CD8-positive, alpha-beta T cell (primary cell): ENCODE measurements at regions of chr11 and their contacts with region 1.

Region 1: DNA sequence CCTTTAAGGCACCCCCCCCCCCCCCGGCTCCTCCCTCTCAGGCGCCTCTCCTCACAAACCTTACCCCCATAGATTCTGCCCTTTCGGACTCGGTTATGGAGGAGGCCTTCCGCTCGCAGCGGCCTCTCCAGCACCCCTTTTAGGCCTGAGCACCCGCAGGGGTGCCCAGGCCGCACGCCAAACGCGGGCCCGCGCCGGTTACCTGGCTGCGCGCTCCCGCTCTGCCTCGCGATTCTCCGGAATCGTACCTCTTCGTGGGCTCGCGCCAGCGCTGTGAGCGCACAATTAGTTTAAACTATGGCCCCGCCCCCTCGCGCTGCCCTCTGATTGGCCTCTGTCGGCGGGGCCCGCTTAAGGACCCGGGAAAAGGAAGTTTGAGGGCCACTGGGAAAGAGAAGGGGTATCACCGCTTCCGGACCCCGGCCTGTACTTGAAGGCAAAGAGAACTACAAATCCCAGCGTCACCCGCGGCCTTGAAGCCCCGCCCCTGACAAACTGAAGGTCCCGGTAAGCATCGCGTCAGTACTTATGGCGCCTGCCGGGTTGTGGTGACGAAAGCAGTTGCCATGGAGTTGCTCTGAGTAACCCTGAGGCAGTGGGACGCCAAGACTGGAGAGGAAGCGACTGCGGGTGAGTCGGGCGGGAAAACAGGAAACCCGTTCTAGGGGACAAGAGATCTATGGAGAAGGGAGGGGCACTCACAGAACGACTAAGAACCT is at the starts of genes LRRC51 and NUMA1:
- DNase-seq: peak; percentile 96 to 100 (median 99)
- ATAC-seq: peak; percentile 86
- H3K4me3 ChIP-seq: peak within 1 kb of the TSS; percentile 61 to 73
- H3K4me3 Mint-ChIP-seq: peak within 1 kb of the TSS; percentile 97
- H3K27ac ChIP-seq: peak within 1 kb of the TSS; percentile 75 to 90
- H3K27ac Mint-ChIP-seq: peak within 1 kb of the TSS; percentile 97
- H3K4me1 ChIP-seq: peaks cover 14% of the 10 kb centered on the region
- H3K4me1 Mint-ChIP-seq: peaks cover 39% of the 10 kb centered on the region
- H3K27me3 ChIP-seq: no peaks in the 10 kb centered on the region
- H3K27me3 Mint-ChIP-seq: no peaks in the 10 kb centered on the region
- CTCF ChIP-seq: no peak
- total RNA-seq, gene LRRC51: 1.1 to 1.3 TPM
- total RNA-seq, gene NUMA1: 171 to 174 TPM

Region 2: GRCh38 chr11:71928737-71929452 is 151.5 kb before region 1 on chr11 and contains the start of gene RNF121:
- CTCF ChIA-PET with region 1: no interaction called
- POLR2A ChIA-PET with region 1: no interaction called
- intact Hi-C with region 1: loop called (anchors 1 kb)
- DNase-seq: peak; percentile 94 to 99 (median 97)
- ATAC-seq: peak; percentile 86
- H3K4me3 ChIP-seq: peak within 1 kb of the TSS; percentile 67 to 98
- H3K4me3 Mint-ChIP-seq: peak within 1 kb of the TSS; percentile 100
- H3K27ac ChIP-seq: peak within 1 kb of the TSS; percentile 90 to 96
- H3K27ac Mint-ChIP-seq: peak within 1 kb of the TSS; percentile 99
- H3K4me1 ChIP-seq: peaks cover 22% of the 10 kb centered on the region
- H3K4me1 Mint-ChIP-seq: peaks cover 57% of the 10 kb centered on the region
- H3K27me3 ChIP-seq: no peaks in the 10 kb centered on the region
- H3K27me3 Mint-ChIP-seq: no peaks in the 10 kb centered on the region
- CTCF ChIP-seq: no peak
- total RNA-seq, gene RNF121: 8.5 to 9.0 TPM

Region 3: DNA sequence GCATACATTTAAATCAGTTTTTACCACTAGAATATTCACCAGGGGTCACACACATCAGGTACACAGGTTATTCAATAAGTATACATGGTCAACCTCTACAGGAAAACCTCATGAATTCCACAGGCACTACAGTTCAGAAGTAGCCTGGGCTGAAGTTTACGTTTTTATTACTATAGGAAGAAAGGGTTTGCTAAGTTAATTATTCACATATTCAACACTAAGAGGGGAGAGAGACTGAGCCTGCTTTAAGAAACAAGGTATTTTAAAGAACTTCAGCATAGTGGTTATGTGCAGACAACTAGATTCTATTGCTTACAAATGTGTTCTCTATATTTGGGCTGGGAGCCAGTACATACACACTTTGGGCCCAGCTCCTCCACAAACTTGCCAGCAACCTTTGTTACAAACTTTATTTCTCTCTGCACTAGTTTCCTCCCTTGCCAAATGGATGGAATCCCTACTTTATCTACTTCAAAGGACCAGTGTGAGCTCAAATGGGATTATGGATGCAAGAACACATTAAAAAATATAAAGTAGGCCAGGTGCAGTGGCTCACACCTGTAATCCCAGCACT is 49.9 kb before region 1 on chr11:
- CTCF ChIA-PET with region 1: interaction called, 82 read pairs
- POLR2A ChIA-PET with region 1: no interaction called
- intact Hi-C with region 1: loop called in 1 of 2 experiments (anchors 1 kb)
- DNase-seq: no peak
- ATAC-seq: no peak
- H3K4me3 ChIP-seq: no peak overlapping the region
- H3K4me3 Mint-ChIP-seq: no peak overlapping the region
- H3K27ac ChIP-seq: peak overlapping the region in 1 of 2 experiments; percentile 0
- H3K27ac Mint-ChIP-seq: peak overlapping the region; percentile 64
- H3K4me1 ChIP-seq: peaks cover 38% of the 10 kb centered on the region
- H3K4me1 Mint-ChIP-seq: peaks cover 71% of the 10 kb centered on the region
- H3K27me3 ChIP-seq: no peaks in the 10 kb centered on the region
- H3K27me3 Mint-ChIP-seq: no peaks in the 10 kb centered on the region
- CTCF ChIP-seq: no peak

Region 4: DNA sequence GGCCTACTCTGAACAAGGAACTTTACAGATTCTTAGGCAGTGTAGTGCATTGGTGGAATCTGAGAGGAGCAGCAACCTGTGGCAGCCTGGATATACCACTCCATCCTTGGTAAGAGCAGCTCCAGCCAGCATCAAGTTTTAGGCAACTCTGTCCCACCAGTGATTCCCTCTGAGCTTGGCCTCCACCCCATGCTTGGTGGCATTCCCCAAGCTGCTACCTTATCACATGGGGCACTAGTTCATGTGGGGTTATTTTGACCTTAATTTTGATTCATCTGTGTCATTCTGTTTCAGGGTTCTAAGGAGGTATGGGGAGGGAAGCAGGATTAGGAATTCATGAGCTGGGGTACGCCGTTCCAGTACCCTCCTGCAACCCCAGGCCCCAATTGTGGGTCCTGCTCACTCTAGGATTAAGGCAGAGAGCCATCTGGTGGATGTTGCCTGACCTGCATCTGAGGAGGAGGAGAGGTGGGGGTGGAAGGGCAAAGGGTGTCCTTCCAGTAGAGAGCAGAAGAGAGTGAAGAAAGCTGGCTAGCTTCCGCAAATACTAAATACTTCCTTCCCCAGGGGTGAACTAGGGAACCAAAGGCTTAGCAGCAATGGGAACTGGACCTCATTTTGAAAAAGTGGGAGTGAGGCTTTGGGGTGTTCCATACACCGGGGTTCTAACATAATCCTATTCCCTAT is 10.7 kb after region 1 on chr11:
- CTCF ChIA-PET with region 1: interaction called, 25 read pairs
- POLR2A ChIA-PET with region 1: no interaction called
- intact Hi-C with region 1: no loop called
- DNase-seq: peak; percentile 50 to 80 (median 73)
- ATAC-seq: peak; percentile 99
- H3K4me3 ChIP-seq: no peak overlapping the region
- H3K4me3 Mint-ChIP-seq: no peak overlapping the region
- H3K27ac ChIP-seq: no peak overlapping the region
- H3K27ac Mint-ChIP-seq: peak overlapping the region; percentile 70
- H3K4me1 ChIP-seq: no peaks in the 10 kb centered on the region
- H3K4me1 Mint-ChIP-seq: peaks cover 12% of the 10 kb centered on the region
- H3K27me3 ChIP-seq: no peaks in the 10 kb centered on the region
- H3K27me3 Mint-ChIP-seq: no peaks in the 10 kb centered on the region
- CTCF ChIP-seq: peak; percentile 74

Region 5: GRCh38 chr11:72112321-72113219 is 32.2 kb after region 1 on chr11 and contains the start of gene ANAPC15:
- CTCF ChIA-PET with region 1: interaction called, 8 read pairs
- POLR2A ChIA-PET with region 1: interaction called, 4 read pairs
- intact Hi-C with region 1: loop called (anchors 1 kb)
- DNase-seq: peak; percentile 95 to 100 (median 98)
- ATAC-seq: peak; percentile 85
- H3K4me3 ChIP-seq: peak within 1 kb of the TSS; percentile 63 to 65
- H3K4me3 Mint-ChIP-seq: peak within 1 kb of the TSS; percentile 96
- H3K27ac ChIP-seq: peak within 1 kb of the TSS; percentile 88 to 94
- H3K27ac Mint-ChIP-seq: peak within 1 kb of the TSS; percentile 99
- H3K4me1 ChIP-seq: peaks cover 16% of the 10 kb centered on the region
- H3K4me1 Mint-ChIP-seq: peaks cover 23% of the 10 kb centered on the region
- H3K27me3 ChIP-seq: no peaks in the 10 kb centered on the region
- H3K27me3 Mint-ChIP-seq: peaks cover 4% of the 10 kb centered on the region
- CTCF ChIP-seq: no peak
- total RNA-seq, gene ANAPC15: 42.1 to 46.2 TPM

Region 6: DNA sequence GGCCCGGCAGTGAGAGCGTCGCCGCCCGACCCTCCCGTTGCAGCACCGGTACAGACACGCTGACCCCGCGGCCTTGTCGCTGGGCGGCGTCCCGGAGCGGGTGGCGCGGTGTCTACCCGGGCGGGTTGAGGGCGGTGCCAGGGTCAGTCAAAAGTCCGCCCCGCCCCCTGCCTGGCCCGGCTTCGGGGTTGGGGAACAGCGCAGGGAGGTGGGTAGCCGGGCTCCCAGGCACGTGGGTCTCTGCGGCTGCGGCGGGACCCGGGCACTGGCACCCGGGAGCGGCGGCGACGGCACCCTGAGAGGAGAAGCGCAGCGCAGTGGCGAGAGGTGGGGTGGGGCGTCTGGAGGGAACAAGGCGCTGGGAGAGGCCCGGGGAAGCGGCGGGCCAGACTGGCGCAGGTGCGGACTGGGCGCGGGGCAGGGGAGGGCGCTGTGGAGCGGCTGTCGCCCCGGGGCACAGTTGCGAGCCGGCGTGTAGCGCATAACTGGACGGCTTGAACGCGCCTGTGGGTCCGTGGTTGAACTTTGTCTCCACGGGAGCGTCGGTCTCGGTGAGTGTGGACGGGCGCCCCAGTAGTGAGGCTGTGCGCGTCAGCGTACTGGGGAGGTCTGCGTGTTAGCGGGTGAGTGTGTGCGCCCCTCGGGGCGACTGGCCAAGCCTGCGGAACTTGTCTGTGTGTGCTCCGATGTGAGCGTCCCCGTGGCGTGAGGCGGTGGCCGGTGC is 1137.9 kb after region 1 on chr11 and contains the start of gene P2RY2:
- CTCF ChIA-PET with region 1: no interaction called
- POLR2A ChIA-PET with region 1: no interaction called
- intact Hi-C with region 1: no loop called
- DNase-seq: peak in 4 of 9 experiments; percentile 11 to 28 (median 19)
- ATAC-seq: peak; percentile 38
- H3K4me3 ChIP-seq: no peak within 1 kb of the TSS
- H3K4me3 Mint-ChIP-seq: peak within 1 kb of the TSS; percentile 49
- H3K27ac ChIP-seq: no peak within 1 kb of the TSS
- H3K27ac Mint-ChIP-seq: no peak within 1 kb of the TSS
- H3K4me1 ChIP-seq: no peaks in the 10 kb centered on the region
- H3K4me1 Mint-ChIP-seq: peaks cover 7% of the 10 kb centered on the region
- H3K27me3 ChIP-seq: peaks cover 3 to 15% of the 10 kb centered on the region in 2 experiments
- H3K27me3 Mint-ChIP-seq: peaks cover 20% of the 10 kb centered on the region
- CTCF ChIP-seq: no peak
- total RNA-seq, gene P2RY2: not detected

Region 7: DNA sequence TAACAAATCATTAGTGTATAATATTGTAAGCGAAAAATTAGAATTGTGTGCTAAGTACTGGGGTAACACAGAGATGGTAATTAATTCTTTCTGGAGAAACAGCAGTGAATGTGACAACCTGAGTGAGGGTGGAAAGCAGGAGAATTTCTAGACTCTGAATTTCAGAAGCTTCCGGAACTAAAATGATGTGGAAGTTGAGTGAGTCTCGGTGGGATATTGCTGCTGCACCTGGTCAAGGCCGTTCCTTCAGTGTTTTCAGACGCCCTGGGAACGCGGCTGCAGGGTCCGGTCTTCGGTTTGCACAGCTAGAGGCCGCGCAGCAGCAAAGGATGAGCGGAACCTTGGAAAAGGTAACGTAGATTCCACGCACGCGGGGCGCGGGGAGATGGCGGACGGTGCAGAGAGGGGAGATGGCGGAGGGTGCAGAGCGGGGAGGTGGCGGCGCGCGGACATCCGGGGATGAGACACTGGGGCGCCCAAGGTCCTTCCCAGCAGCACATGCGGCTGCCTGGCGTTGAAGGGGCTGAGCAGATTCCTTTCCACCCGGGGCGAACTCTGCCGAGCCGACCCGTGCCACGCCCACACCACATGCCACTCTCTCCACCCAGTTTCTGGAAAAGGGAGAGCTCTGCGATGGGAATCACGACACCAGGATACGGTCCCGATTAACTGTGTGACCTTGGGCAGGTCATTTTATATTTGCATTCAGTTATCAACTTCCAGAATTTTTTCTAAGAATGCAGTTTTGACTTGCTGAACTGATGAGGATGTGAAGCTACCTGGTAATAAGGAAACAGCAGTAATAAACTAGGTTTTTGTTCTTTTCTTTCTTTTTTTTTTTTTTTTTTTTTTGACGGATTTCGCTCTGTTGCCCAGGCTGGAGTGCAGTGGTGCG is 1707.5 kb after region 1 on chr11 and contains the start of gene MRPL48:
- CTCF ChIA-PET with region 1: no interaction called
- POLR2A ChIA-PET with region 1: no interaction called
- intact Hi-C with region 1: loop called in 1 of 2 experiments (anchors 5 kb)
- DNase-seq: peak; percentile 75 to 93 (median 88)
- ATAC-seq: peak; percentile 100
- H3K4me3 ChIP-seq: peak within 1 kb of the TSS; percentile 87 to 89
- H3K4me3 Mint-ChIP-seq: peak within 1 kb of the TSS; percentile 100
- H3K27ac ChIP-seq: peak within 1 kb of the TSS; percentile 77 to 82
- H3K27ac Mint-ChIP-seq: peak within 1 kb of the TSS; percentile 99
- H3K4me1 ChIP-seq: peaks cover 4% of the 10 kb centered on the region
- H3K4me1 Mint-ChIP-seq: peaks cover 33% of the 10 kb centered on the region
- H3K27me3 ChIP-seq: no peaks in the 10 kb centered on the region
- H3K27me3 Mint-ChIP-seq: no peaks in the 10 kb centered on the region
- CTCF ChIP-seq: no peak
- total RNA-seq, gene MRPL48: 10.2 to 13.7 TPM